Activated CD4-positive, alpha-beta T cell treated with anti-CD3 and anti-CD28 coated beads for 36 hours (primary cell): ENCODE measurements at regions of chr2 and their contacts with region 1.

Region 1: GRCh38 chr2:68709421-68709911 is 25.1 kb upstream of the ARHGAP25 start:
- DNase-seq: peak; percentile 34
- ATAC-seq: peak; percentile 89
- H3K4me3 Mint-ChIP-seq: no peak overlapping the region
- H3K27ac Mint-ChIP-seq: peak overlapping the region; percentile 56
- H3K4me1 Mint-ChIP-seq: peaks cover 25% of the 10 kb centered on the region
- H3K27me3 Mint-ChIP-seq: no peaks in the 10 kb centered on the region

Region 2: GRCh38 chr2:68689553-68690537 is 19.6 kb before region 1 on chr2:
- CTCF ChIA-PET with region 1: interaction called, 20 read pairs
- POLR2A ChIA-PET with region 1: no interaction called
- intact Hi-C with region 1: no loop called
- DNase-seq: peak; percentile 22
- ATAC-seq: peak; percentile 85
- H3K4me3 Mint-ChIP-seq: peak overlapping the region; percentile 5
- H3K27ac Mint-ChIP-seq: peak overlapping the region; percentile 21
- H3K4me1 Mint-ChIP-seq: peaks cover 21% of the 10 kb centered on the region
- H3K27me3 Mint-ChIP-seq: peaks cover 3% of the 10 kb centered on the region

Region 3: DNA sequence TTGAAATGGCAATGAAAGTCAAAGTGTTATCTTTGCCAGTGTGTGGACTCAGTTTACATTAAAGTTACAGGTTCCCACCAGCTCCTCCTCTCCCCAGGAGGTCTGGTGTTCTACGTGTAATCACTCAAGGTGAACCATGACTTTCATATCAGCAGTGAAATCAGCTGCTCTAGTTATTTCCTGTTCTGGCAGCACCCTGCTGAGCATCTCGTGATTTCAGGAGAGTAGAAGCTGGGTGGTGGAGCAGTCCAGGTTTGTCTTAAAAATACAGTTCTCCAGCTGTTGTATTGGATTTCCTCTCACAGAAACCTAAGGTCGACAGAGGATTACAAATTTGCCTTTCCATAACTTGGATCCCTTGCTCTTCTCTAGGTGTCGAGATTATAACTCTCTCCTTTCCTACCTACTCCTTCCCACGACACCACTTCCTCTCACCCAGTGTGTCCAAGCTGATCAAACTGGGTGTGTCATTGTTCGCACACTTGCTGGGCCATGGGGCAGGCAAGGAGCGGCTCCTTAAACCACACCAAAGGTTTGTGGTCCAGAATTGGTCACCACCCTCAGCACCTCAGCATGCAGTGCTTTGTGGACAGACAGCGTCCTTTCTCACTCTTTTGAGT is 12.1 kb after region 1 on chr2:
- CTCF ChIA-PET with region 1: interaction called, 20 read pairs
- POLR2A ChIA-PET with region 1: no interaction called
- intact Hi-C with region 1: no loop called
- DNase-seq: peak; percentile 53
- ATAC-seq: peak; percentile 32
- H3K4me3 Mint-ChIP-seq: peak overlapping the region; percentile 53
- H3K27ac Mint-ChIP-seq: peak overlapping the region; percentile 89
- H3K4me1 Mint-ChIP-seq: peaks cover 86% of the 10 kb centered on the region
- H3K27me3 Mint-ChIP-seq: no peaks in the 10 kb centered on the region

Region 4: GRCh38 chr2:68751397-68752339 is 42.2 kb after region 1 on chr2:
- CTCF ChIA-PET with region 1: interaction called, 261 read pairs
- POLR2A ChIA-PET with region 1: no interaction called
- intact Hi-C with region 1: loop called in 1 of 2 experiments (anchors 5 kb)
- DNase-seq: peak; percentile 96
- ATAC-seq: peak; percentile 93
- H3K4me3 Mint-ChIP-seq: peak overlapping the region; percentile 20
- H3K27ac Mint-ChIP-seq: peak overlapping the region; percentile 84
- H3K4me1 Mint-ChIP-seq: peaks cover 87% of the 10 kb centered on the region
- H3K27me3 Mint-ChIP-seq: no peaks in the 10 kb centered on the region

Region 5: GRCh38 chr2:68909793-68910674 is 200.6 kb after region 1 on chr2:
- CTCF ChIA-PET with region 1: interaction called, 57 read pairs
- POLR2A ChIA-PET with region 1: no interaction called
- intact Hi-C with region 1: loop called (anchors 1 kb)
- DNase-seq: peak; percentile 88
- ATAC-seq: peak; percentile 20
- H3K4me3 Mint-ChIP-seq: no peak overlapping the region
- H3K27ac Mint-ChIP-seq: peak overlapping the region; percentile 69
- H3K4me1 Mint-ChIP-seq: peaks cover 36% of the 10 kb centered on the region
- H3K27me3 Mint-ChIP-seq: no peaks in the 10 kb centered on the region